ENCODE measurements at regions of chr6 and their contacts with region 1.

Region 1: DNA sequence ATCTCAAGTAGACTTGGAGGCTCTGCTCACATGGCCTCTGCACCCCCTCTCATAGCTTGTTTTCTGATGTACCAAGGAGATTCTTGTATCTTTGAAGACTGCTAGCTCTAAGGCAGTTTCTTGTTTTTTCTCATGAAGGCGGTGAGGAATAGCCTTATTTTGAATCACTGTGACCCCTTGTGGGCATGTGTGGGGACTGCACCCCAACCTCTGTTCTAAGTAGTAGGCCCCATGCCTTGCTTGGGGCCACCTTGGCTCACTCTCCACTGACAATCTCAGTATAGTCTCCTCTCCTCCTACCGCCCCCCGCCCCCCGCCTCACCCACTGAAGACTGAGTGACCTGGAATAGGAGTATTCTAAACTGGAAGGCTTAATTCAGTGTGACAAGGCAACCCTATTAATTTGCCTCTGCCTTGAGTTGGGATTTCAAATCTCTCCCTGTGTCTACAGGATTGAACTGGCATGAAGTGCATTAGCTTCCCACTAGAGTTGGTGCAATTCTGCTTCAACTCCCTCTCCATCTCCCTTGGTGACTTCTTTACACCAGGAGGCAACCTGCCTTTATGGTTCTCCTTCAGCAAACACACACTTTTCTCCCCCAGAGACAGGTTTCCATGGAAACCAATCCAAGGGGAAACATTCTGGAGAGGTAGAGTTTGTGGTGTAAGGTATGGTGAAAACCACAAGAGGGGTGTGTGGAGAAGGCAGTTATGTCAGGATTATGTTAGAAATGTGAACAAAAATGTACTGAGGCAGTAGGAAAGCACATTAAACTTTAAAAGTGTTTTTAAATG is 75.5 kb upstream of the ECI2 start:
- DNase-seq: peak; percentile 42
- H3K4me3 ChIP-seq: no peak overlapping the region
- H3K27ac ChIP-seq: no peak overlapping the region
- H3K27me3 ChIP-seq: peaks cover 1% of the 10 kb centered on the region
- CTCF ChIP-seq: peak; percentile 87

Region 2: GRCh38 chr6:4021133-4021853 is 189.5 kb before region 1 on chr6:
- CTCF ChIA-PET with region 1: interaction called, 14 read pairs
- POLR2A ChIA-PET with region 1: no interaction called
- DNase-seq: peak; percentile 91
- H3K4me3 ChIP-seq: peak overlapping the region; percentile 91
- H3K27ac ChIP-seq: peak overlapping the region; percentile 95
- H3K27me3 ChIP-seq: no peaks in the 10 kb centered on the region
- CTCF ChIP-seq: peak; percentile 33; the same call in 1 of the 2 replicates

Region 3: GRCh38 chr6:4125936-4126864 is 84.6 kb before region 1 on chr6:
- CTCF ChIA-PET with region 1: interaction called, 33 read pairs
- POLR2A ChIA-PET with region 1: no interaction called
- DNase-seq: peak; percentile 62
- H3K4me3 ChIP-seq: no peak overlapping the region
- H3K27ac ChIP-seq: peak overlapping the region; percentile 11
- H3K27me3 ChIP-seq: no peaks in the 10 kb centered on the region
- CTCF ChIP-seq: peak; percentile 58

Region 4: GRCh38 chr6:4155848-4156466 is 54.9 kb before region 1 on chr6:
- CTCF ChIA-PET with region 1: interaction called, 12 read pairs
- POLR2A ChIA-PET with region 1: no interaction called
- DNase-seq: peak; percentile 64
- H3K4me3 ChIP-seq: no peak overlapping the region
- H3K27ac ChIP-seq: no peak overlapping the region
- H3K27me3 ChIP-seq: peaks cover 6% of the 10 kb centered on the region
- CTCF ChIP-seq: peak; percentile 88

Region 5: DNA sequence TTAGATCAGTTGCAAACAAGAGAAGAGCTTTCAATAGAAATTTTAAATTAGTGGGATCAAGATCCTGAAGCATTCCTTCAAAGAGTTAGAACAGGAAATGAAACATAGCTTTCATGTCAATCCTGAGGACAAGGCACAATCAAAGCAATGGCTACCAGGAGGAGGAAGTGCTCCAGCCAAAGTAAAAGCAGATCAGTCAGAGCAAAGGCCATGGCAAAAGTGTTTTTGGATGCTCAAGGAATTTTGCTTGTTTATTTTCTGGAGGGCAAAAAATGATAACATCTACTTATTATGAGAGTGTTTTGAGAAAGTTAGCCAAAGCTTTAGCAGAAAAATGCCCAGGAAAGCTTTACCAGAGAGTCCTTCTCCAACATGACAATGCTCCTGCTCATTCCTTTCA is 14.5 kb before region 1 on chr6:
- CTCF ChIA-PET with region 1: interaction called, 20 read pairs
- POLR2A ChIA-PET with region 1: no interaction called
- DNase-seq: no peak
- H3K4me3 ChIP-seq: no peak overlapping the region
- H3K27ac ChIP-seq: no peak overlapping the region
- H3K27me3 ChIP-seq: no peaks in the 10 kb centered on the region
- CTCF ChIP-seq: no peak

Measured in AG04450 (cell line).